ENCODE measurements at regions of chr11 and their contacts with region 1.

Region 1: DNA sequence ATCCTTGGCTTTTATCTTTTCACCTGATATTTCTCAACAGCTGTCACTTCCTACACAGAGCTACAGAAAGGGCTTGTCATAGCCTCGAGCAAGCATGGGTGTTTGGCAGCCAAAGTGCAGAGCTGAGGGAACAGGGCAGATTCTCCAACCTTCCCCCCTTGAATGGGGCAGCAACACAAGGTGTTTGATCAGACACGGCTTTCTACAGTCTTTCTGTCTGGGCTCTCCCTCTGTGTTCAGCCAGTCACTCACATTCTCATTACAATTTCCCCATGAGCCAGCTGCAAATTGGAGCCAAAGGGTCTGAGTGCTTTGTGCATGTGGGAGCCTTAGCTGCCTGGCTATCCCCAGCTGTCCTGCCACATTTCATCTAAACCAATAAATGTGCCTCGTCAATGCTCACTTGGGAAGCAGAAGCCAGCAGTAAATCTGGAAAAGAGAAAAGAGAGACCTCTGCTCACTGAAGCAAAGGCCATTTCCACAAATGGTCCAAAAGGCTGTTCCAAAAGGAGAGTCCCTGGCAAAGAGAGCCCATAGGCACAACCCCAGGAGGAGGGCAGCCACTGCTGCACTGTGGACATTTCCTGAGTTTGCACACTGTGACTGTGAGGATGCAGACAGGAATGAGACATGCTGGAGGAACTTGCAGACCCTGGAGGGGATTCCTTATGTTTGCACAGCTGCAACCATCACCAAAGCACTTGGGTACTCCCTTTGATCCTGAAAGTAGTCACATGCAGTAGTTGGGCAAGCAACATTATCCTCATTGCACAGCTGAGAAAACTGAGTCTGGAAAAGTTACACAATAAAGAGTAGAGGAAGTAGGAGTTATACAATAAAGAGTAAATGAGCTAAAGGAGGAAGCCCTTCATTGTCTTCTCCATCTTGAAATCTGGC is 186.8 kb downstream of the FAM181B start:
- DNase-seq: peak; percentile 49 to 71
- H3K4me3 ChIP-seq: no peak overlapping the region
- H3K4me3 Mint-ChIP-seq: peak overlapping the region; percentile 4
- H3K27ac Mint-ChIP-seq: no peak overlapping the region
- H3K4me1 ChIP-seq: no peaks in the 10 kb centered on the region
- H3K4me1 Mint-ChIP-seq: peaks cover 15% of the 10 kb centered on the region
- H3K27me3 ChIP-seq: no peaks in the 10 kb centered on the region
- H3K27me3 Mint-ChIP-seq: peaks cover 5% of the 10 kb centered on the region
- CTCF ChIP-seq: no peak

Region 2: DNA sequence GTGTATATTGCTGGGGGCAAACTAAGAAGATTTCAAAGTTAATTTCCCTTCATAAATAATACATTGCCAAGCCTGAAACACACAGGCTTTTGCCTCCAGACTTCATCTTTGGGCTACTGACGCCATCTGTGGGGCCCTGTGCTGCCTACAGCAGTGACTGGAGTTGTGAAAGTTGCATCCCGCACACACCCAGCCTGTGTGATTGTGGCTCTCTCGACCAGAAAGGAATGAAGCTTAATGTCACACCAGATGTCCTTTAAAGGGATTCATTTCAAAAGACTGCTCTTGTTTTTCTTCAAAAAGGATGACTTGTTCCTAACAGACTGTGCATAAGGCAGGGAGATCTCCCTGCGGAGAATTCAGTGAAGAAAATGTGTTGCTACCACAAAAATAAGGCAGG is 23.8 kb before region 1 on chr11:
- CTCF ChIA-PET with region 1: no interaction called
- POLR2A ChIA-PET with region 1: no interaction called
- intact Hi-C with region 1: loop called (anchors 2 kb)
- DNase-seq: no peak
- H3K4me3 ChIP-seq: no peak overlapping the region
- H3K4me3 Mint-ChIP-seq: no peak overlapping the region
- H3K27ac Mint-ChIP-seq: no peak overlapping the region
- H3K4me1 ChIP-seq: no peaks in the 10 kb centered on the region
- H3K4me1 Mint-ChIP-seq: no peaks in the 10 kb centered on the region
- H3K27me3 ChIP-seq: 0 out of 2 replicates have a peak, but pooled peaks cover 1% of the 10 kb centered on the region
- H3K27me3 Mint-ChIP-seq: peaks cover 3% of the 10 kb centered on the region
- CTCF ChIP-seq: peak in 1 of 2 experiments; percentile 23

Region 3: GRCh38 chr11:82533628-82534327 is 13.1 kb before region 1 on chr11:
- CTCF ChIA-PET with region 1: no interaction called
- POLR2A ChIA-PET with region 1: no interaction called
- intact Hi-C with region 1: no loop called
- DNase-seq: no peak
- H3K4me3 ChIP-seq: no peak overlapping the region
- H3K4me3 Mint-ChIP-seq: no peak overlapping the region
- H3K27ac Mint-ChIP-seq: no peak overlapping the region
- H3K4me1 ChIP-seq: no peaks in the 10 kb centered on the region
- H3K4me1 Mint-ChIP-seq: no peaks in the 10 kb centered on the region
- H3K27me3 ChIP-seq: no peaks in the 10 kb centered on the region
- H3K27me3 Mint-ChIP-seq: peaks cover 2% of the 10 kb centered on the region
- CTCF ChIP-seq: no peak

Region 4: DNA sequence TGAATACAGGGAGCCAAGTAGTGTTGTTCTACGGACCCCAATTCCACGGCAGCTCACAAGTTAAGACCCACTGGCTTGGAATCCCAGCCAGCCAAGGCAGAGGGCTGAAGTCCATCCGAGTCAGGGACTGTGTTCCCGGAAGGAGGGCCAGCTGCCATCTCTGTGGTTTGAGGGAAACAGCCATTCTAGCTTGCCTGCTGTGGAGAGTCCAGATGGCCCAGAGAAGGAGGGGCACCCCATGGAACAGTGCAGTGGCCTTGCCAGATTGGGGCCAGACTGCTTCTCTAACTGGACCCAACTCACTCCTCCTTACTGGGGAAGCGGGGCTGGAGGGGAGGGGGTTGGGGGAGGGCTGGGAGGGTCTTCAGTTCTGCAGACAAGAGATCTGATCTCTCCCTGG is 30.3 kb after region 1 on chr11:
- CTCF ChIA-PET with region 1: no interaction called
- POLR2A ChIA-PET with region 1: no interaction called
- intact Hi-C with region 1: no loop called
- DNase-seq: no peak
- H3K4me3 ChIP-seq: no peak overlapping the region
- H3K4me3 Mint-ChIP-seq: no peak overlapping the region
- H3K27ac Mint-ChIP-seq: no peak overlapping the region
- H3K4me1 ChIP-seq: no peaks in the 10 kb centered on the region
- H3K4me1 Mint-ChIP-seq: peaks cover 5% of the 10 kb centered on the region
- H3K27me3 ChIP-seq: no peaks in the 10 kb centered on the region
- H3K27me3 Mint-ChIP-seq: peaks cover 10% of the 10 kb centered on the region
- CTCF ChIP-seq: no peak

Region 5: GRCh38 chr11:83033972-83034672 is 487.2 kb after region 1 on chr11:
- CTCF ChIA-PET with region 1: no interaction called
- POLR2A ChIA-PET with region 1: no interaction called
- intact Hi-C with region 1: no loop called
- DNase-seq: no peak
- H3K4me3 ChIP-seq: no peak overlapping the region
- H3K4me3 Mint-ChIP-seq: no peak overlapping the region
- H3K27ac Mint-ChIP-seq: no peak overlapping the region
- H3K4me1 ChIP-seq: peaks cover 22% of the 10 kb centered on the region
- H3K4me1 Mint-ChIP-seq: peaks cover 31% of the 10 kb centered on the region
- H3K27me3 ChIP-seq: no peaks in the 10 kb centered on the region
- H3K27me3 Mint-ChIP-seq: no peaks in the 10 kb centered on the region
- CTCF ChIP-seq: no peak